Head of caudate nucleus (tissue), 42 donors: ENCODE measurements at regions of chr1 and their contacts with region 1.

Region 1: DNA sequence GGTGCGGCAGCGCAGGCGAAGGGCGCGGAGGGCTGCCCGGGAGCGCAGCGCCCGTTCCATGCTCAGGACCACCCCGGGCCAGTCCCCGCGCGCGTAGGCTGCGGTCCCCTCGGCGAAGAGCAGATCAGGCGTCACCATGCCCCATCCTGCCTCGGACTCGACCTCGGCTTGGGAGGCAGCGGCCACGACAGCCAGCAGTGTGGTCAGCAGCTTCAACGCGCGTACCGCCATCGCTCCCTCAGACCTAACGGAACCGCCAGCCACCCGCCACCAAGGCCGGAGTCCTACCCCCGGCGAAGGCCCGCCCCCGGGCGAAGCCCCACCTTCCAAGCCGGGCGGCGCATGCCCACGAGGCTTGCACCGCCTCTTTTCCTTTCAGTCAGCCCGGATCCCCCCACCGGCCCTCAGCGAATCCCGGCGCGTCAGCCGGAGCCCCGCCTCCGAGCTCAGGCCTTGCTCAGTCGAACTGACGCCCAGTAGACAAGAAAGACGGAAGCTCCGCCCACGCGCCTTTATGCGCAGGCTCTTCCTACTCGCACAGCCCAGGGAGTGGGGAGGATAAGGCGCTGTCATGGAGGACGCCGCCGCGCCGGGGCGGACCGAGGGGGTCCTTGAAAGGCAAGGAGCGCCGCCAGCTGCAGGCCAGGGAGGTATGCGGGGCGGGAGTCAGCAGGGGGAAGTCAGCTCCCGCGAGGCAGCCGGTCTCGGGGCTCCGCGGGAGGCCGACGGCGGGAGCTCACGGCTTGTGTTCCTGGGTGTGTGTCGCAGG is at the starts of genes C1orf50 and P3H1:
- DNase-seq: peak; percentile 99 to 100 (median 100)

Region 2: GRCh38 chr1:42681741-42682483 is 85.0 kb before region 1 on chr1 and contains the start of gene YBX1:
- intact Hi-C with region 1: loop called (anchors 5 kb)
- DNase-seq: peak; percentile 89 to 99 (median 96)

Region 3: DNA sequence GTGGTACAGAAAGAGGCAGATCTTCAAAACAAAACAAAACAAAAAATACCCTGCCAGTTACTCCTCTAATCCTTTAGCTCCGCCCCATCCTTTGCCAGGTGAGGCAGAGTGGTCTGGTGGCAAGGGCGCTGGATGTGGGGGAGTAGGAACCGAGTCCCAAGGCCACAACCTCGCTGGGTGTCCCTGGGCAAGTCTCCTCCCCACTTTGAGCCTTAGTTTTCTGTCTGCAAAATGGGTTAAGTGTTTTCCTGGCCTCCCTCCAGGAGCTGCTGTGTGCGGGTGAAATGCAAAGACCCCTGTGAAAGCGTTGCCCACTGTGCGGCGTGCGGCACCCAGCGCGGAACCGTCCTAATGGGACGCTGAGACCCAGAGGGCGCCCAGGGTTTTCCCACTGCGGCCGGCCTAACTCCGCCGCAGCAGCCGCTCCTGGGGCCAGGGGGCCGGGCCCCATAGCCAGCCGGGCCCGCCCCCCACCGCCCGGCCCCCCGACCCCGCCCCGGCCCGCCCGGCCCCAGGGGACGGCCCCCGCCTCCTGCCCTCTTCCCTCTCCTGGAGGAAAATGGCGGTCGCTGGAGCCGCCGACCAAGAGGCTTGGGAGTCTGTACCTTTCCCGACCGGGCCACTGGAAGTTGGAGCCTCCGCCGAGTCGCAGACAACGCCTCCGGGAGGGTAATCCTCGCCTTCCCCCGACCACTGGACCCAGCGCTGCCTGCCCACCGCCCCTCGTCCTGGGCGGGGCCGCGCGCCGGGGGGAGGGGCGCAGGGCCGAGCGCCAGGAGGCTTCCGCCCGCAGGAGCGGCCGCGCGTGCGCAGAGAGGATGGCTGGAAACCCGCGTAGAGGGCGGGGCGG is 49.9 kb after region 1 on chr1 and contains the starts of genes ERMAP and SVBP:
- intact Hi-C with region 1: loop called (anchors 5 kb)
- DNase-seq: peak; percentile 76 to 98 (median 95)

Region 4: GRCh38 chr1:42833981-42834380 is 67.1 kb after region 1 on chr1:
- intact Hi-C with region 1: no loop called
- DNase-seq: peak in 2 of 42 donors; percentile 4 to 9

Region 5: DNA sequence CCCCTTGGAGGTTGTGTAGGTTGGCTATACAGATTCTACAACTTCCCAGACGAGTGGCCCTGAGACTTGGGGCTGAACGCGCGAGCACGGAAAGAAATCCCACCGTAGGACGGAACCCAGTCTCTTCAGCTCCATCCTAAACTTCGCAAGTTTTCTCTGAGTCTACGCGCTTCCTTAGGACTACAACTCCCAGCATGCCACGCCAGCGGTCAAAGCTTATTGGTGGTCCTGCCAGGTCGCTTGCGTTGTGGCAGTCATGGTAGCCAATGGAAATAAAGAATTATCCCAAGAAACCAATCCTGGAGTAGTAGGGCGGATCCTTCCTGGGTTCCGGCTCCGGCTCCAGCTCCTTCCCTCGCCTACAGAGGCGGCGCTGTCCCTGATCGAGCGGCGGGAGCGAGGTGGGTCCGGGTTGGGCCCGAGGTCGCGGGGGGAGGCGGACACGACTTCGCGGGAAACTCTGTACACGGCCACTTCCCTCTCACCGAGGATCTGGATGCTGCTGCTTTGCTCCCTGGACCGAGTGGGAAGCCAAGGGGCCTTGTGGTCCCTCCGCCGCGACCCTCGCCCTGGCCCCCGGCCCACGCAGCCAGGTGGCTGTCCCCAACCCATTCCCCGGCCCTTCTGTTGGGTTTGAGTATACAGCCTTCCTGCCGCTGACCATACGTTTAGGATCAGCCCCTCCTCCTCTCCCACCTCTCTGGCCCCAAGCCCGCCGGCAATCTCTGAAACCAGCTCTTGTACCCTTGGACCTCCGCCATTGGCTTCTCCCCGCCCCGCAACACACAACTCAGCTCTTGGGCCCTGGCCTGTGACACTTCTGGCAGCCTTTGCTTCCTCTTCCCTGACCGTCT is 79.6 kb after region 1 on chr1 and contains the start of gene ZNF691:
- intact Hi-C with region 1: loop called (anchors 10 kb)
- DNase-seq: peak; percentile 83 to 98 (median 94)